IMR-90 (cell line): ENCODE measurements at regions of chr2 and their contacts with region 1.

Region 1: GRCh38 chr2:190088917-190089316 is 26.4 kb upstream of the MSTN start:
- DNase-seq: peak; percentile 71
- ATAC-seq: peak; percentile 71
- H3K4me3 ChIP-seq: no peak overlapping the region
- H3K27ac ChIP-seq: no peak overlapping the region
- H3K4me1 ChIP-seq: no peaks in the 10 kb centered on the region; the same call in 1 of the 2 replicates
- H3K27me3 ChIP-seq: peaks cover 2% of the 10 kb centered on the region; the same call in 1 of the 2 replicates
- CTCF ChIP-seq: peak; percentile 86
- POLR2A ChIP-seq: no peak
- RAD21 ChIP-seq: peak; percentile 89

Region 2: GRCh38 chr2:188701836-188702235 is 1387.1 kb before region 1 on chr2:
- CTCF ChIA-PET with region 1: no interaction called
- POLR2A ChIA-PET with region 1: no interaction called
- dilution Hi-C with region 1: no loop called
- in situ Hi-C with region 1: no loop called
- intact Hi-C with region 1: no loop called
- DNase-seq: peak; percentile 85
- ATAC-seq: peak; percentile 89
- H3K4me3 ChIP-seq: no peak overlapping the region
- H3K27ac ChIP-seq: no peak overlapping the region
- H3K4me1 ChIP-seq: no peaks in the 10 kb centered on the region
- H3K27me3 ChIP-seq: no peaks in the 10 kb centered on the region
- CTCF ChIP-seq: no peak
- POLR2A ChIP-seq: no peak
- RAD21 ChIP-seq: no peak

Region 3: GRCh38 chr2:190190507-190190906 is 101.6 kb after region 1 on chr2:
- CTCF ChIA-PET with region 1: no interaction called
- POLR2A ChIA-PET with region 1: no interaction called
- dilution Hi-C with region 1: no loop called
- in situ Hi-C with region 1: no loop called
- intact Hi-C with region 1: no loop called
- DNase-seq: no peak
- ATAC-seq: no peak
- H3K4me3 ChIP-seq: no peak overlapping the region
- H3K27ac ChIP-seq: no peak overlapping the region
- H3K4me1 ChIP-seq: no peaks in the 10 kb centered on the region
- H3K27me3 ChIP-seq: no peaks in the 10 kb centered on the region
- CTCF ChIP-seq: no peak
- POLR2A ChIP-seq: no peak
- RAD21 ChIP-seq: no peak

Region 4: DNA sequence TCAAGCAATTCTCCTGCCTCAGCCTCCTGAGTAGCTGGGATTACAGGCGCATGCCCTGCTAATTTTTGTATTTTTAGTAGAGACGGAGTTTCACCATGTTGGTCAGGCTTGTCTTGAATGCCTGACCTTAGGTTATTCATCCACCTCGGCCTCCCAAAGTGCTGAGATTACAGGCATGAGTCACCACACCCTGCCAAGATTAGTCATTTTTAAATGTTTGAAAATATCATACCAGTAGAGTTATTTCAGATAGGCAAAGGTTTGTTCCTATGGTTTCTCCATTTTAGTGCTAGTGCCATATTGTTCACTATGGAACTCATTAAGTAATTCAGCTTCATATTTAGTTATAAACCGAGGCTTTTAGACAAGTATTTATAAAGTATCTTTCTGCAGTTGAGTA is 178.4 kb after region 1 on chr2:
- CTCF ChIA-PET with region 1: no interaction called
- POLR2A ChIA-PET with region 1: no interaction called
- dilution Hi-C with region 1: no loop called
- in situ Hi-C with region 1: no loop called
- intact Hi-C with region 1: no loop called
- DNase-seq: peak; percentile 92
- ATAC-seq: peak; percentile 86
- H3K4me3 ChIP-seq: no peak overlapping the region
- H3K27ac ChIP-seq: peak overlapping the region; percentile 33; the same call in 1 of the 2 replicates
- H3K4me1 ChIP-seq: peaks cover 5% of the 10 kb centered on the region
- H3K27me3 ChIP-seq: no peaks in the 10 kb centered on the region; the same call in 1 of the 2 replicates
- CTCF ChIP-seq: no peak
- POLR2A ChIP-seq: no peak
- RAD21 ChIP-seq: no peak

Region 5: GRCh38 chr2:190277234-190278112 is 188.6 kb after region 1 on chr2:
- CTCF ChIA-PET with region 1: interaction called, 5 read pairs
- POLR2A ChIA-PET with region 1: no interaction called
- dilution Hi-C with region 1: no loop called
- in situ Hi-C with region 1: loop called (anchors 10 kb)
- intact Hi-C with region 1: loop called (anchors 1 kb)
- DNase-seq: peak; percentile 51
- ATAC-seq: peak; percentile 29; the same call in 1 of the 2 replicates
- H3K4me3 ChIP-seq: no peak overlapping the region
- H3K27ac ChIP-seq: no peak overlapping the region
- H3K4me1 ChIP-seq: no peaks in the 10 kb centered on the region
- H3K27me3 ChIP-seq: no peaks in the 10 kb centered on the region; the same call in 1 of the 2 replicates
- CTCF ChIP-seq: peak; percentile 67
- POLR2A ChIP-seq: no peak
- RAD21 ChIP-seq: peak; percentile 64

Region 6: DNA sequence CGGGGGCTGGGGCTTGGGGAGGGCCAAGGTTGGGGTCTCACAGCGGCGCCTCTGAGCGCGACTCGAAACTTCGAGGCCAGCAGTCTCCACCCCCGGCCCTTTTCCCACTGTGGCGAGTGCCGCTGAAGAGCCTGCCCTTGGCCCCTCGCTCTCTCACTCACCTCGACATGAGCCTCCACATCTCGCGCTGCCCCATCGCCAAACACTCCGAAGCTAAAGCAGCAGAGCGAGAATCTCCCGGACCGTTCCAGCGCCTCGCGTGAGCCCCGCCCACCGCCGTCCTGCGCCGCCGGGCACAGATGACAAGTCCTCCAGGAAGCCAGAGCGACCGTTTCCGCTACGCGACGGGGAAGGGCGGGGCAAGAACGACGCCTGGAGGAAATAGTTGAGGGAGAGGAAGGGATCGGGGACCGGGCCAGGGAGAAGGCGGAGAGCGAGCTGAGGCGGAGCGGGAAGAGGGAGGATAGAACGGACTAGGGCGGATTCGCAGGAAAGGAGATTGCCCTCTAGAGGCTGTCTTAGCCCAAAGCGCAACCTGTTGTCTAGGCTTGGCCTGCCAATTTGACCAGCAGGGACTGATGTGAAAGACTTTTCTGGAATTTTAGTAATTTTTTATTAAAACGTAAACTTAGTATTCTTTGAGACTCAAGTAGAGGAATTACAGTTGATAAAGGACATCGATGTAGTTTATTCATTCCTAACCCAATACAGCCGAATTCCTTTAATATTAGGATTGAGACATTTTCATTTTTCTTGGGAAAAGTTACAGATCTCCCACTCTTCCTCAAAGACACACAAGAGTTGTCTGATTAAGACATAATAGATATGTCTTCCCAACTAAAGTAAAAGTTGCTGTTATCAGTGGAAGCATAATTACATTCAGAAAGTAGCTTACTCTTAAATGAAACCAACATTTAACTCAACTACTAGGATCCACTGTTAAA is 230.9 kb after region 1 on chr2 and contains the start of gene HIBCH:
- CTCF ChIA-PET with region 1: interaction called, 3 read pairs
- POLR2A ChIA-PET with region 1: no interaction called
- dilution Hi-C with region 1: no loop called
- in situ Hi-C with region 1: no loop called
- intact Hi-C with region 1: loop called (anchors 1 kb)
- DNase-seq: peak; percentile 98
- ATAC-seq: peak; percentile 97
- H3K4me3 ChIP-seq: peak within 1 kb of the TSS; percentile 62
- H3K27ac ChIP-seq: peak within 1 kb of the TSS; percentile 38
- H3K4me1 ChIP-seq: peaks cover 5% of the 10 kb centered on the region
- H3K27me3 ChIP-seq: no peaks in the 10 kb centered on the region
- CTCF ChIP-seq: peak; percentile 91
- POLR2A ChIP-seq: no peak
- RAD21 ChIP-seq: peak; percentile 46
- total RNA-seq, gene HIBCH: 8.8 and 15.6 TPM in 2 replicates

Region 7: DNA sequence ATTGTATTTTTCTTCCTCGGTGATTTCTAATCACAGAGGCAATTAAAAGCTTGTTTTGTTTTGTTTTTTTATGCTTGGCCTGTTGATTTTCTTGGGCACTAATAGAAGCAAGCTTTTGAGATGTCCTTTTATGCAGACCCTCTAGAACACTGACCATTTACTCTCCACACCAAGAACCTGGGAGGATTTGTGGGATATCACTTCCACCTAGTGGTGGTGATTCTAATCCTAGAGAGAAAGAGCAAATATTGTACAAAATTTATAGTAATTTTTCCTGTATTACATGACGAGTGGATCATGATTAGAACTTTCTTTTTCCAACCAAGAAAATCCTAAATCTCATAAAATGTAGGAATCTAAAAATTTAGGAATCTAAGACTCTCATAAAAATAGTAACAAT is 422.2 kb after region 1 on chr2:
- CTCF ChIA-PET with region 1: interaction called, 3 read pairs
- POLR2A ChIA-PET with region 1: no interaction called
- dilution Hi-C with region 1: no loop called
- in situ Hi-C with region 1: loop called (anchors 5 kb)
- intact Hi-C with region 1: loop called (anchors 1 kb)
- DNase-seq: peak; percentile 57
- ATAC-seq: peak; percentile 68
- H3K4me3 ChIP-seq: no peak overlapping the region
- H3K27ac ChIP-seq: no peak overlapping the region
- H3K4me1 ChIP-seq: no peaks in the 10 kb centered on the region
- H3K27me3 ChIP-seq: no peaks in the 10 kb centered on the region
- CTCF ChIP-seq: peak; percentile 73
- POLR2A ChIP-seq: no peak
- RAD21 ChIP-seq: peak; percentile 84